CD4-positive, alpha-beta T cell (primary cell): ENCODE measurements at regions of chr1 and their contacts with region 1.

Region 1: GRCh38 chr1:210882414-210883221 is 251.3 kb downstream of the KCNH1 start:
- DNase-seq: no peak
- ATAC-seq: no peak
- H3K4me3 ChIP-seq: no peak overlapping the region
- H3K4me3 Mint-ChIP-seq: no peak overlapping the region
- H3K27ac ChIP-seq: no peak overlapping the region
- H3K27ac Mint-ChIP-seq: no peak overlapping the region
- H3K4me1 ChIP-seq: no peaks in the 10 kb centered on the region
- H3K4me1 Mint-ChIP-seq: no peaks in the 10 kb centered on the region
- H3K27me3 ChIP-seq: peaks cover 0 to 2% of the 10 kb centered on the region in 2 experiments
- H3K27me3 Mint-ChIP-seq: peaks cover 13% of the 10 kb centered on the region
- CTCF ChIP-seq: no peak

Region 2: GRCh38 chr1:210822932-210823331 is 59.7 kb before region 1 on chr1:
- CTCF ChIA-PET with region 1: no interaction called
- POLR2A ChIA-PET with region 1: no interaction called
- intact Hi-C with region 1: loop called in 1 of 2 experiments (anchors 10 kb)
- DNase-seq: no peak
- ATAC-seq: no peak
- H3K4me3 ChIP-seq: no peak overlapping the region
- H3K4me3 Mint-ChIP-seq: no peak overlapping the region
- H3K27ac ChIP-seq: no peak overlapping the region
- H3K27ac Mint-ChIP-seq: no peak overlapping the region
- H3K4me1 ChIP-seq: no peaks in the 10 kb centered on the region
- H3K4me1 Mint-ChIP-seq: no peaks in the 10 kb centered on the region
- H3K27me3 ChIP-seq: peaks cover 3 to 7% of the 10 kb centered on the region in 2 experiments
- H3K27me3 Mint-ChIP-seq: peaks cover 22% of the 10 kb centered on the region
- CTCF ChIP-seq: no peak

Region 3: DNA sequence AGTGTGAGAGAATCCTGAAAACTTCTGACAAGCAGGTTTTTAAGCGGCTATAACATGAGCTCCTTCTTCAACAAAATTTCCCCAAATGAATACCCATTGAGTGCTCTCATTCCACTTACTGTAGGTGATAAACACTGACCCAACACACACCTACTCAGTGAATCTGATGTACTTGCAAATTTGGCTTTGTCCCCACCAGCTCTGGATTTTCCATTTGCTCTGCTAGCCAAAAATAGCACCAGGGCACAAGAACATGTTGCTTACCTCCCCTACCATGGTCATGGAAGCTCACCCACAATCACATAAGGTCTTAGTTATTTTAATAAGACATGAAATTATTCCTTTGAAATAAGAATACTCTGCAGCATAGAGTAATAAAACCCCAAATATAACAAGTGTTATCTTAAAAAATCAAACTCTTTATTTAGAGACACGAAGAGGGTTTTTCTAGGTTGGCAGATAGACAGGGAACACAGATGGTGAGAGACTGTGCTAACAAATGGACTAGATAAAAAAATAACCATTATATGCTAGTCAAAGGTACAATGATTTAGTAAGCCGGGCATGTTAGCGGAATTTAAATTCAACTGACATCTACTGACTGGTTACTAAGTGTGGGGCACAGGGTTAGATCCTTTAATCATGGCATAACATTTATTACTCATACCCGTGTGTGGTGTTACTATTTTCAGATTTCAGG is 40.5 kb before region 1 on chr1:
- CTCF ChIA-PET with region 1: no interaction called
- POLR2A ChIA-PET with region 1: no interaction called
- intact Hi-C with region 1: no loop called
- DNase-seq: no peak
- ATAC-seq: no peak
- H3K4me3 ChIP-seq: no peak overlapping the region
- H3K4me3 Mint-ChIP-seq: no peak overlapping the region
- H3K27ac ChIP-seq: no peak overlapping the region
- H3K27ac Mint-ChIP-seq: no peak overlapping the region
- H3K4me1 ChIP-seq: no peaks in the 10 kb centered on the region
- H3K4me1 Mint-ChIP-seq: no peaks in the 10 kb centered on the region
- H3K27me3 ChIP-seq: peaks cover 0 to 6% of the 10 kb centered on the region in 2 experiments
- H3K27me3 Mint-ChIP-seq: peaks cover 18% of the 10 kb centered on the region
- CTCF ChIP-seq: no peak